CD8-positive, alpha-beta memory T cell (primary cell): ENCODE measurements at regions of chr2 and their contacts with region 1.

Region 1: DNA sequence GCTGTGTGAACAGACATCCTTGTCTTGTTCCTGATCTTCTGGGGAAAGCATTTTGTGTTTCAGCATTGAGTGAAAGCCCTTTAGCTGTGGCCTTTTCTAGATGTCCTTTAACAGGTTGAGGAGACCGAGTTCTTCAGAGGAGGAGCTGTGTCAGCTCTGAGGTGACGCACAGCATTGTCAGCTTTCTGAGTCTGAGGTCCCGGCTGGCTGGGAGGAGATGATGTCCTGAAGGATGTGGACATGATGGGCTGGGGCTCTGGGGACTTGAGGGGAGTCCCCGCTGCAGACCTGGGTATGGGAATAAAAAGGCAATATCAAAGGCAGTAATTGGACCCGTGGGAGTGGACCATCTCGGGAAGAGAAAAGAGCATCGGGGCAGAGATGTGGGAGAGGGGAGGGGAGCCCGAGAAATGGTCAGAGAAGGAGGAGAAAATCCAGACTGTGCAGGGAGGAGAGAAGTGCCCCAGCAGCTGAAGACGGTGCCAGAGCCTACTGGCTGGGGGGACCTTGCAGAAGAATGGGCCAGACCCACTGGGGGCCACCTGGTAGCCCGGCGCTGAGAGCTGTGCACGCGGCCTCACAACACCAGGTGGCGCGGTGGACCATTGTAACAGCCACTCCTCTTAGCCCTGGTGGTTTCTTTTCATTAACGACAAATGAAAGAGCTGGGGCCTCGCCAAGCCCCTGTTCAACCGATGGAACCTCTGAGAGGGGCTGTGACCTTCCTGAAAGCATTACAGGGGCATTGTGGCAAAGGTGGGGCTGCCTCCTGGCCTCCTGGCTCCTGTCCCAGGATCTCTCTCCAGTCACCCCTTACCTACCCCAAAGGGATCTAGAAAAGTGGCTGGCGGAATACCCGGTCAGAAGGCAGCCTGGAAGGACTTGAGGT is 61.6 kb downstream of the ST3GAL5 start:
- DNase-seq: peak; percentile 74 to 88 (median 76)
- H3K4me3 ChIP-seq: no peak overlapping the region
- H3K4me3 Mint-ChIP-seq: peak overlapping the region in 3 of 7 donors; percentile 24 to 47 (median 37)
- H3K27ac ChIP-seq: no peak overlapping the region
- H3K27ac Mint-ChIP-seq: peak overlapping the region in 7 of 8 donors; percentile 51 to 93 (median 74)
- H3K4me1 ChIP-seq: peaks cover 12% of the 10 kb centered on the region
- H3K4me1 Mint-ChIP-seq: peaks cover 21 to 33% (median 29%) of the 10 kb centered on the region in 3 donors
- H3K27me3 ChIP-seq: no peaks in the 10 kb centered on the region
- H3K27me3 Mint-ChIP-seq: peaks cover 2 to 13% of the 10 kb centered on the region in 2 donors

Region 2: GRCh38 chr2:85838181-85838580 is 10.9 kb after region 1 on chr2:
- CTCF ChIA-PET with region 1: interaction called, 18 read pairs
- POLR2A ChIA-PET with region 1: no interaction called
- DNase-seq: no peak
- H3K4me3 ChIP-seq: no peak overlapping the region
- H3K4me3 Mint-ChIP-seq: no peak overlapping the region
- H3K27ac ChIP-seq: no peak overlapping the region
- H3K27ac Mint-ChIP-seq: peak overlapping the region; percentile 6 to 92 (median 78)
- H3K4me1 ChIP-seq: peaks cover 4% of the 10 kb centered on the region
- H3K4me1 Mint-ChIP-seq: peaks cover 20 to 36% (median 35%) of the 10 kb centered on the region in 3 donors
- H3K27me3 ChIP-seq: no peaks in the 10 kb centered on the region
- H3K27me3 Mint-ChIP-seq: peaks cover 0 to 3% of the 10 kb centered on the region in 2 donors

Region 3: GRCh38 chr2:85852937-85853498 is 25.8 kb after region 1 on chr2:
- CTCF ChIA-PET with region 1: interaction called, 34 read pairs
- POLR2A ChIA-PET with region 1: interaction called, 3 read pairs
- DNase-seq: peak; percentile 70 to 92 (median 79)
- H3K4me3 ChIP-seq: peak overlapping the region; percentile 60
- H3K4me3 Mint-ChIP-seq: peak overlapping the region; percentile 83 to 90 (median 88)
- H3K27ac ChIP-seq: peak overlapping the region; percentile 82
- H3K27ac Mint-ChIP-seq: peak overlapping the region; percentile 98 to 100 (median 100)
- H3K4me1 ChIP-seq: peaks cover 58% of the 10 kb centered on the region
- H3K4me1 Mint-ChIP-seq: peaks cover 62 to 87% (median 86%) of the 10 kb centered on the region in 3 donors
- H3K27me3 ChIP-seq: no peaks in the 10 kb centered on the region
- H3K27me3 Mint-ChIP-seq: no peaks in the 10 kb centered on the region

Region 4: DNA sequence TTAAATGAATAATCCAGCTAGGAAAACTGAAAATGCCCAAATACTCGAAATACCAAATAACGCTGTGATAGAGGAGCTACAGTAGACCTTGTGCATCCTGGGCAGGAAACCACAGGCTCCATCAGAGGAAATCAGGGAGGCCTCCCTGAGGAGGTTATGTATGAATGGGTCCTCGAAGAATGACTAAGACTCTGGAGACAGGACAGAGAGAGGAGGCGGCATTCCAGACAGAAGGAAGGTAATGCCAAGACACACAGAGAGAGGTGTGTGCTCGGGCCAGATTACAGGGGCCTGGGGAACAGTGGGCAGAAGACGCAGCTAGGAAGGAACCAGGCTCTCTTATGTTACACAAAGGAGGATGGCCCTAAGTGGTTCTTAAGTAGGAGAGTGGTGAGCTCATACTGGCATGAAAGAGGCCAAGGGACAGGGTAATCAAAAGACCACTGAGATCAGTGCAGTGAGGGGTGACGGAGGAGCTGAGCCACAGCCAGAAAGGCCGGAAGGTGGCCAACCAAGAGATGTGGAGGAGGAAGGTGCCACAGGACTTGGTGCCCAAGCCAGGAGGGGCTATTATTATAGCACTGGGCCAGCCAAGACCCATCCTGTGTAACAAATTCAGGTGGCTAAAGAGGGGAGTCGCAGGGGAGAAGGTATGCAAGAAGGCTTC is 51.6 kb after region 1 on chr2:
- CTCF ChIA-PET with region 1: interaction called, 12 read pairs
- POLR2A ChIA-PET with region 1: no interaction called
- DNase-seq: no peak
- H3K4me3 ChIP-seq: no peak overlapping the region
- H3K4me3 Mint-ChIP-seq: peak overlapping the region in 4 of 7 donors; percentile 40 to 81 (median 47)
- H3K27ac ChIP-seq: no peak overlapping the region
- H3K27ac Mint-ChIP-seq: peak overlapping the region; percentile 34 to 95 (median 76)
- H3K4me1 ChIP-seq: peaks cover 36% of the 10 kb centered on the region
- H3K4me1 Mint-ChIP-seq: peaks cover 65 to 82% (median 79%) of the 10 kb centered on the region in 3 donors
- H3K27me3 ChIP-seq: no peaks in the 10 kb centered on the region
- H3K27me3 Mint-ChIP-seq: no peaks in the 10 kb centered on the region

Region 5: DNA sequence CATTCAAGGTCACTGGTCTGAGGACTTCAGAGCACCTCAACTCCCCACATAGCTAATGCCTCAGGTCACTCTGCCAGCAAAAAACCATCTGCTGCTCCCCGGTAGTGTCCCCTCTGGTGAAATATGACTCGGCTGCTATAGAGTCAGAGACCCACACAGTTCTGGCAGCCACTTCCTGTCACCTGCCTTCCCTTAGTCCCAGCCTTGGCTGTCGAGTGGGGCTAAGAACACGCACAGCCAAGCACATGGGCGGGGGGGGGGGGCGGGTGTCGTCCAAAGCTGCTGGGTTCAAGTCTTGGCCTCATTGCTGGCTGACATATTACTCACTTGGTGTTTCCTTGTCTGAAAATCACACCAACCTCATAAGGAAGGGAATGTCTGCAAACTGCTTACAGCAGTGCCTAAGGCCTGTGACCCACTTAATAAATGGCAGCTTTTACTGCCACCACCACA is 240.9 kb after region 1 on chr2:
- CTCF ChIA-PET with region 1: interaction called, 11 read pairs
- POLR2A ChIA-PET with region 1: interaction called, 4 read pairs
- DNase-seq: peak; percentile 35 to 75 (median 38)
- H3K4me3 ChIP-seq: no peak overlapping the region
- H3K4me3 Mint-ChIP-seq: peak overlapping the region in 5 of 7 donors; percentile 19 to 27 (median 21)
- H3K27ac ChIP-seq: no peak overlapping the region
- H3K27ac Mint-ChIP-seq: peak overlapping the region; percentile 28 to 95 (median 86)
- H3K4me1 ChIP-seq: peaks cover 18% of the 10 kb centered on the region
- H3K4me1 Mint-ChIP-seq: peaks cover 18 to 29% (median 21%) of the 10 kb centered on the region in 3 donors
- H3K27me3 ChIP-seq: no peaks in the 10 kb centered on the region
- H3K27me3 Mint-ChIP-seq: no peaks in the 10 kb centered on the region

Region 6: GRCh38 chr2:86105252-86105968 is 278.2 kb after region 1 on chr2 and contains the start of gene POLR1A:
- CTCF ChIA-PET with region 1: interaction called, 12 read pairs
- POLR2A ChIA-PET with region 1: no interaction called
- DNase-seq: peak; percentile 68 to 90 (median 86)
- H3K4me3 ChIP-seq: peak within 1 kb of the TSS; percentile 94
- H3K4me3 Mint-ChIP-seq: peak within 1 kb of the TSS; percentile 87 to 97 (median 92)
- H3K27ac ChIP-seq: peak within 1 kb of the TSS; percentile 85
- H3K27ac Mint-ChIP-seq: peak within 1 kb of the TSS; percentile 91 to 100 (median 99)
- H3K4me1 ChIP-seq: peaks cover 34% of the 10 kb centered on the region
- H3K4me1 Mint-ChIP-seq: peaks cover 56 to 82% (median 81%) of the 10 kb centered on the region in 3 donors
- H3K27me3 ChIP-seq: no peaks in the 10 kb centered on the region
- H3K27me3 Mint-ChIP-seq: no peaks in the 10 kb centered on the region
- total RNA-seq, gene POLR1A: 60.3 to 63.3 TPM